ENCODE measurements at regions of chr21 and their contacts with region 1.

Region 1: GRCh38 chr21:46228345-46229051 is at the start of gene LSS:
- DNase-seq: peak; percentile 97 to 100 (median 99)
- ATAC-seq: peak; percentile 95 to 98 (median 97)
- H3K4me3 ChIP-seq: peak within 1 kb of the TSS; percentile 63 to 99 (median 95)
- H3K27ac ChIP-seq: peak within 1 kb of the TSS; percentile 62 to 91 (median 84)
- H3K4me1 ChIP-seq: peaks cover 0 to 47% (median 23%) of the 10 kb centered on the region in 12 donors
- H3K27me3 ChIP-seq: no peaks in the 10 kb centered on the region
- CTCF ChIP-seq: no peak
- POLR2A ChIP-seq: peak in 1 of 2 donors; percentile 64
- total RNA-seq, gene LSS: 34.2 to 65.5 (median 41.7) TPM

Region 2: DNA sequence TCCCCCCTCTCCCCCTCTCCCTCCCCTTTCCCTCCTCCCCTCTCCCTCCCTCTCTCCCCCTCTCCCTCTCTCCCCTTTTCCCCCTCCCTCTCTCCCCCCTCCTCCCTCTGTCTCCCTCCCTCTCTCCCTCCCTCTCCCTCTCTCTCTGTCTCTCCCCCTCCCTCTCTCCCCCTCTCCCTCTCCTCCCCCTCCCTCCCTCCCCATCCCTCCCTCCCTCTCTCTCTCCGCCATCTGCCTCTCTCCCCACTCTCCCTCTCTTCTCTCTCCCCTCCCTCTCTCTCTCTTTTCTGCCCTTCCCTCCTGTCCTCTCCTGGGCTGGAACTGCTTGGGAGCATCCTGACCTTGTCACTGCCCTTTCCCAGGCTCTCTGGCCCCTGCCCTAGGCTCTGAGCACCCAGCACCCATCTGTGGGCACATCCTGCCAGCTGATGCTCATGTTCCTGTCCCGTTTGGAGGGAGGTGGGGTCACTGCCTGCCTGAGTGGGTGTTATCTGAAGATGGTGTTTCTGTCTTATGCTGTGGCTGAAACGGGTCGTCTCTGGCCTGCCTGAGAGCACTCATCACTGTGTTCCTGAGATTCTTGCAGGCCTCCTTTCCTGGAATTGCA is 83.9 kb before region 1 on chr21:
- intact Hi-C with region 1: loop called in 2 of 10 experiments (anchors 10 kb)
- DNase-seq: peak in 2 of 5 donors; percentile 13
- ATAC-seq: no peak
- H3K4me3 ChIP-seq: no peak overlapping the region
- H3K27ac ChIP-seq: no peak overlapping the region
- H3K4me1 ChIP-seq: peaks cover 0 to 9% (median 6%) of the 10 kb centered on the region in 12 donors
- H3K27me3 ChIP-seq: no peaks in the 10 kb centered on the region
- CTCF ChIP-seq: no peak
- POLR2A ChIP-seq: no peak

Region 3: GRCh38 chr21:46153247-46154150 is 75.0 kb before region 1 on chr21:
- intact Hi-C with region 1: loop called in 5 of 10 experiments (anchors 5 to 10 kb)
- DNase-seq: peak in 4 of 5 donors; percentile 35 to 77 (median 56)
- ATAC-seq: peak in 3 of 4 donors; percentile 48 to 75 (median 72)
- H3K4me3 ChIP-seq: peak overlapping the region in 10 of 12 donors; percentile 20 to 47 (median 29)
- H3K27ac ChIP-seq: peak overlapping the region in 4 of 12 donors; percentile 18 to 58 (median 38)
- H3K4me1 ChIP-seq: peaks cover 3 to 15% (median 10%) of the 10 kb centered on the region in 12 donors
- H3K27me3 ChIP-seq: no peaks in the 10 kb centered on the region
- CTCF ChIP-seq: peak; percentile 56 to 84 (median 68)
- POLR2A ChIP-seq: no peak

Region 4: DNA sequence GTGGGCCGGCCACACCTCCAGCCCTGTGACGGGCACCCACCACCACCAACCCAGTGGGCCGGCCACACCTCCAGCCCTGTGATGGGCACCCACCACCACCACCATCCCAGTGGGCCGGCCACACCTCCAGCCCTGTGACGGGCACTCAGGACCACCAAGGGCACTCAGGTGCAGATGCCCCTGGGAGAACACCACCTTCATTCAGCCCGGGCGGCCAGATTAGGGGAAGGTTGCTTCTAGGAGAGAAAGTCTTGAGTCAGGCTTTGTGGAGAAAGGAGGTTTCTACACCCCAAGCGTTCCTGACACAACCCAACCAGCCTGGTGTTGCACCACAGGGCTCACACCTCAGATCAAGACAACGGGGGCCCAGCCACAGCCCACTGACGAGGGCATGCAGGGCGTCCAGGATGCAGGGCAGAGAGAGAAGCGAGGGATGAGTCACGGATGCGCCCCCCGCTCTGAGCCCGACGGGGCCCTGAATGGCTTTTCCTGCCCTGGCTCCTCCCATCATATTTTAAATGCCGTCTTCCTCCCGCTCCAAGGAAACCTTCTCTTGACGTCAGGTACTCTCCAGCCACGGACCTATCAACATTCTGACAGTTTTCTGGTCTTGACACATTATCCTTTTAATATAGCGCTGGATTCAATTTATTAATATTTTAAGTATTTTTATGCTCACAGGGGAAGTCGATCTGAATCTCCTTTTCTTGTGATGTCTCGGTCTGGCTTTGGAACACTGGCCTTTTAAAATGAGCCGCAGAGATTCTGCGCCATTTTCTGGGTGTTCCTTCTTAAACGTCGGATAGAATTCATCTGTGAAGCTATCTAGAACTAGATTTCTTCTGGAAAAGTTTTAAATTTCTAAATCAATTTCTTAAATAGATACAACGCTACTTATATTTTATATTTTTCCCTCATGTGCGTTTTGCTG is 43.6 kb before region 1 on chr21:
- intact Hi-C with region 1: loop called in 4 of 10 experiments (anchors 2 to 5 kb)
- DNase-seq: peak; percentile 77 to 94 (median 92)
- ATAC-seq: peak; percentile 59 to 76 (median 65)
- H3K4me3 ChIP-seq: peak overlapping the region; percentile 32 to 93 (median 66)
- H3K27ac ChIP-seq: peak overlapping the region; percentile 72 to 97 (median 88)
- H3K4me1 ChIP-seq: peaks cover 6 to 45% (median 22%) of the 10 kb centered on the region in 12 donors
- H3K27me3 ChIP-seq: no peaks in the 10 kb centered on the region
- CTCF ChIP-seq: no peak
- POLR2A ChIP-seq: no peak

Region 5: DNA sequence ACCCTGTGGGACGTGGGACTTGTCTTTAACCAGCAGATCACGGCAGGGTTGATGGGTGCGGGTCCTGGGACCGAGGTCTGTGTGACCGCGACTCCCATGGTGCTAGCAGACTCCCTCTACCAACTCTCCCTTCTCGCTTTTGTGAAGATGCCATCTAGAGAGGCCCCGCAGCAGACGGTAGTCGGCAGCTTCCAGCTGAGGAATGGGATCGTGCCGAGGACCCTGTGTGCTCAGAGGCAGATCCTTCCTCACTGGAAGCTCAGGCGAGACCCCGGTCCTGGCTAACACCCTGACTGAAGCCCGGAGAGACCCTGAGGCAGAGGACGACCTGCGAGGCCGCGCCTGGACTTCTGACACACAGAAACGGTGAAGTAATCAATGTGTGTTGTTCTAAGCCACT is 31.8 kb before region 1 on chr21:
- intact Hi-C with region 1: no loop called
- DNase-seq: peak in 1 of 5 donors; percentile 11
- ATAC-seq: no peak
- H3K4me3 ChIP-seq: no peak overlapping the region
- H3K27ac ChIP-seq: no peak overlapping the region
- H3K4me1 ChIP-seq: no peaks in the 10 kb centered on the region
- H3K27me3 ChIP-seq: no peaks in the 10 kb centered on the region
- CTCF ChIP-seq: no peak
- POLR2A ChIP-seq: no peak

Region 6: DNA sequence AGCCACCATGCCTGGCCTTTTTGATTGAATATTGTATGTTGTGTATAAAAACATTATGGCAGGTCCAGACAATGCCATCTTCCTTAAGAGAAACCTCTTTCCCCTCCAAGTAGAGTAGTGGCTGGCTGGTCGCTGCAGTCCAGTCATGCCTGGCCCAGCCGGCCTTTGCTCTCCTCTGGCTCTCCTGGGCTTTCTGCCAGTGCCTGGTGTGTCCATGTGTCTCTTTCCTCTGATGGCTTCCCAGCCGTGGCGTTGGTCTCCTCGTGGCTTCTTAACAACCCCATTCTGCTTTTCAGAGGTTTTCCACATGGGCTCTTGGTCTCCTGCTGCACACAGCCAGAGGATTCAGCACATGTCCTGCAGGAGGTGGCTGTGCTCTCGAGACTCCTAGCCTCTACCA is 288.9 kb after region 1 on chr21:
- intact Hi-C with region 1: no loop called
- DNase-seq: peak in 4 of 5 donors; percentile 44 to 79 (median 63)
- ATAC-seq: peak in 3 of 4 donors; percentile 85 to 90 (median 86)
- H3K4me3 ChIP-seq: no peak overlapping the region
- H3K27ac ChIP-seq: no peak overlapping the region
- H3K4me1 ChIP-seq: peaks cover 0 to 25% (median 12%) of the 10 kb centered on the region in 12 donors
- H3K27me3 ChIP-seq: no peaks in the 10 kb centered on the region
- CTCF ChIP-seq: no peak
- POLR2A ChIP-seq: no peak